K562 (cell line): ENCODE measurements at regions of chr1 and their contacts with region 1.

Region 1: GRCh38 chr1:80566867-80567266 is 1233.9 kb upstream of the ADGRL2 start:
- DNase-seq: no peak
- ATAC-seq: no peak
- H3K4me3 ChIP-seq: no peak overlapping the region
- H3K27ac ChIP-seq: no peak overlapping the region
- H3K4me1 ChIP-seq: no peaks in the 10 kb centered on the region
- H3K27me3 ChIP-seq: no peaks in the 10 kb centered on the region
- CTCF ChIP-seq: no peak
- EP300 ChIP-seq: no peak
- POLR2A ChIP-seq: no peak
- RAD21 ChIP-seq: no peak

Region 2: GRCh38 chr1:80607064-80607463 is 40.2 kb after region 1 on chr1:
- CTCF ChIA-PET with region 1: no interaction called
- POLR2A ChIA-PET with region 1: no interaction called
- in situ Hi-C with region 1: no loop called
- intact Hi-C with region 1: loop called (anchors 1 kb)
- DNase-seq: no peak
- ATAC-seq: no peak
- H3K4me3 ChIP-seq: no peak overlapping the region
- H3K27ac ChIP-seq: no peak overlapping the region
- H3K4me1 ChIP-seq: no peaks in the 10 kb centered on the region
- H3K27me3 ChIP-seq: no peaks in the 10 kb centered on the region
- CTCF ChIP-seq: no peak
- EP300 ChIP-seq: no peak
- POLR2A ChIP-seq: no peak
- RAD21 ChIP-seq: no peak

Region 3: DNA sequence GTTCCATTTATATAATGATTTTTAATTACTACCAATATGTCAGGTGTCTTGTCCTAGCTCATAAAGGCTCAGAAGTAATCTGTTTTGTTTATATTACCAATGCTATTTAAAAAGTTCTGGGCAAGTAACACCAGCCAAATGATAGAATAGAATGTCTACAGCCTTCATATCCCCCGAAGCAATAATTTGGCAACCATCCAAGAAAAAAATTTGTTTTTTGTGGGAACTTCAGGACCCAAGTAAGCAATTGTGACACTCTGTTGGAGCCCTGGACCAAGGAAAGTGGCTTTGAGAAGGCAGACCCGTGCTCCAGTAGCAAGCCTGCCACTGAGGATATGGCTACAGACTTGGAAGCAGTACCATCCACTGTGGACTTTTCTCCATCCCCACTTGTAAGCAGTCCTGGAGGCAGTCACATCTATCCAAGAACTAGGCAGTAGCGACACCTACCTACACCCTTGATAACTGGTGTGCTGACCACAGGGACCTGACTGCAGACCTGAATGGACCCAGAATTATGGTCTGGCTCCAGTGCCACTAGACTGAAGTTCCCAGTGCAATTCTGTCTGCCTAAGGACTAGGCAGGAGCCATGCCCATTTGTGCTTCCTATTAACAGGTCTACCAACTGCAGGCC is 363.1 kb after region 1 on chr1:
- CTCF ChIA-PET with region 1: no interaction called
- POLR2A ChIA-PET with region 1: no interaction called
- in situ Hi-C with region 1: no loop called
- intact Hi-C with region 1: no loop called
- DNase-seq: no peak
- ATAC-seq: no peak
- H3K4me3 ChIP-seq: no peak overlapping the region
- H3K27ac ChIP-seq: no peak overlapping the region
- H3K4me1 ChIP-seq: no peaks in the 10 kb centered on the region
- H3K27me3 ChIP-seq: no peaks in the 10 kb centered on the region
- CTCF ChIP-seq: no peak
- EP300 ChIP-seq: no peak
- POLR2A ChIP-seq: no peak
- RAD21 ChIP-seq: no peak